Mammary epithelial cell (primary cell): ENCODE measurements at regions of chr12 and their contacts with region 1.

Region 1: DNA sequence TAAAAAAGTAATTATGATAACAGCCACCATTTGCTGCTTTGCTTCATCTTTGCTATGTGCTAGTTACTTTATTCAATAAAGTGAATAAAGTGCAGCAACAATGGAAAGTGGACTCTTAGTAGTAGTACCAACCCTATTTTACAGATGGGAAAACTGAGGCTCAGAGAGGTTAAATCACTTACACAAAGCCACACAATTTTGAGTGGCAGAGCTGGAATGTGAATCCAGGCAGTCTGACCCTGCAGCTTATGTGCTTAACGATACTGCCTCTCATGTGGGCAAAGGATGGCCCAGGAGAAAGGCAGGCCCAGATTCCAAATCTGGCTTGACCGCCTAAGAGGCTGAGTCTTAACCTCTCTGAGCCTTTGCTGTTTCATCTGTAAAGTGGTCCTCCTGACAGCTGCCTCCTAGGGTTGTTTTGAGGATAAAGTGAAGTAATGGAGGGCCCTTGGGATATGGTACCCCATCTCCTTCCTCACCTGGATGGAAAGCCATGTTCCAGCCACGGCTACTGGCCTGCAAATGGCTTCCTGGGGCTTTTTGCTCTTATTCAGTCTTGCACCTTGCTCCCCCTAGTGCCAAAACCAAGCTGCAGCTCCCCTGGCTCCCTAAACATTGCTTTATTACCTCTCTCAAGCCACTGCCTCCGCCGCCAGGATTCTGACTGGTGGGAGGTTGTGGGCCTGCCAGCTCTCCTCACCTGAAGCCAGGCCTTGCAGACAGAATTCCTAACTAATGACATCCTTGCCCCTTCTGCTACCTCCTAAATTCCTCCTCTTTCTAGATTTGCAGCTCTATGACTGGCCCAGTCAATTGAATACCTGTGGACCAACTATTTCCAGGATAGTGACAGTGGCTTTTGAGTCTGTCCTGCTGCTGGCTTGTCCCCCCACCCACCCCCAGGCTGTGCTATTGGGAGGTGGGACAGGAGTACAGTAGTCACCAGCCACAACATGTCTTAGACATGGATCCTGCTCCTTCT is 283.3 kb upstream of the PWP1 start:
- DNase-seq: peak; percentile 75
- H3K4me3 ChIP-seq: no peak overlapping the region
- H3K27ac ChIP-seq: no peak overlapping the region
- H3K4me1 ChIP-seq: peaks cover 6% of the 10 kb centered on the region
- H3K27me3 ChIP-seq: no peaks in the 10 kb centered on the region
- CTCF ChIP-seq: peak; percentile 89 to 93

Region 2: DNA sequence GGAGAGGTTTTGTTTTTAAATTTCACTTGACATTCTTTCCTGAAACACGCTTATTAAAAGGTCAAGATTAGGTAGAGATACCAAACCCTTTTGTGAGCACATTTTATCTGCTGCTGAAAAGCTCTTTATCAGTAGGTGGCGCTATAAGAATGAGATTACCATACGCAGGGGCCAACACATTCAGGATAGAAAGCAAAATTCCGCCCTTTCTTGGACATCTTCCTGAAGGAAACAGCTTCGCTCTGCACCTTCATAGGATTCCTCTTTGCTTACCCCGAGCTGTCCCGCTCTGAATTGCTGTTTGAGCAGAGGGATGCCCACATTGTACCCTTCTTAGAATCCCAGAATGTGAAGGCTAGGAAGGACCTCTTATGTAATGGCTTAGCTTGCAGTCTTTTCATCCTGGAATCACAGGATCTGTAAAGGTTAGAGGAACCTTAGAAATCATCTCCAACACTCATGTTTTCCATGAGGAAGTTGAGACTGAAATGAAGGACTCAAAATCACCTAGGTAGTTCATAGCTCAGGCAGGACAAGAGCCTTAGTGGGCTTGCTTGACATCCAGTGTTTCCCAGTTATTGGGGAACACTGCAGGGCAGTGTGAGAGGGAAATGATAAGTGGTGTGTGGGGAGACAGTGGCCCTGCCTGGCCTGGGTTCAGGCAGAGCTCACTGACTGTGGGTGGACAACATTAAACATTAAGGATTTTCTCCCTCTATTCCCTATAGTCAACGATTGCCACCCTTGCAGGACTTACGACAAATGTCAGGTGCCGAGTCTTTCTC is 270.3 kb before region 1 on chr12:
- CTCF ChIA-PET with region 1: interaction called, 5 read pairs
- dilution Hi-C with region 1: no loop called
- in situ Hi-C with region 1: loop called (anchors 5 kb)
- intact Hi-C with region 1: loop called (anchors 1 kb)
- DNase-seq: peak; percentile 53
- H3K4me3 ChIP-seq: no peak overlapping the region
- H3K27ac ChIP-seq: no peak overlapping the region
- H3K4me1 ChIP-seq: no peaks in the 10 kb centered on the region
- H3K27me3 ChIP-seq: no peaks in the 10 kb centered on the region
- CTCF ChIP-seq: peak; percentile 87 to 95

Region 3: DNA sequence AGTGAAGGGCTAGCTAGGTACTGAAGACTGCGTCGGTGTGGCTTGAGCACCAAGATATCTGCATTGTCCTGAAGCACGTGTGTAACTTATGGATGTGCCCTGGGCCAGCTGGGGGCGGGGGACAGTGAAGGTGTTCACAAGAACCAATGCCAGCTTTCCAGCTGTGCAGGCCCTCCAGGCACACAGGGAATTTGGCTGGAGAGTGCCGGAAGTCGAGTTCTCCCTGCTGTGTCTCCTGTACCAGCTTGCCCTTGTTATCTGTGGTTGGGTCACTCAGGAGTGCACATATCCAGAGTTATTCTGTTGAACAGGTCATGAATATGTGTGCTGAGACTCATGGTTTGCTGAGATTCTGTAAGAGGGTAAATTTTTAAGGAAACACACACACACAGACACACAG is 233.1 kb before region 1 on chr12:
- CTCF ChIA-PET with region 1: no interaction called
- dilution Hi-C with region 1: no loop called
- in situ Hi-C with region 1: no loop called
- intact Hi-C with region 1: no loop called
- DNase-seq: peak; percentile 67
- H3K4me3 ChIP-seq: no peak overlapping the region
- H3K27ac ChIP-seq: no peak overlapping the region
- H3K4me1 ChIP-seq: peaks cover 11% of the 10 kb centered on the region
- H3K27me3 ChIP-seq: no peaks in the 10 kb centered on the region
- CTCF ChIP-seq: no peak

Region 4: GRCh38 chr12:107304588-107305532 is 97.5 kb before region 1 on chr12:
- CTCF ChIA-PET with region 1: no interaction called
- dilution Hi-C with region 1: loop called (anchors 5 kb)
- in situ Hi-C with region 1: no loop called
- intact Hi-C with region 1: no loop called
- DNase-seq: peak; percentile 24
- H3K4me3 ChIP-seq: no peak overlapping the region
- H3K27ac ChIP-seq: no peak overlapping the region
- H3K4me1 ChIP-seq: peaks cover 6% of the 10 kb centered on the region
- H3K27me3 ChIP-seq: no peaks in the 10 kb centered on the region
- CTCF ChIP-seq: no peak

Region 5: DNA sequence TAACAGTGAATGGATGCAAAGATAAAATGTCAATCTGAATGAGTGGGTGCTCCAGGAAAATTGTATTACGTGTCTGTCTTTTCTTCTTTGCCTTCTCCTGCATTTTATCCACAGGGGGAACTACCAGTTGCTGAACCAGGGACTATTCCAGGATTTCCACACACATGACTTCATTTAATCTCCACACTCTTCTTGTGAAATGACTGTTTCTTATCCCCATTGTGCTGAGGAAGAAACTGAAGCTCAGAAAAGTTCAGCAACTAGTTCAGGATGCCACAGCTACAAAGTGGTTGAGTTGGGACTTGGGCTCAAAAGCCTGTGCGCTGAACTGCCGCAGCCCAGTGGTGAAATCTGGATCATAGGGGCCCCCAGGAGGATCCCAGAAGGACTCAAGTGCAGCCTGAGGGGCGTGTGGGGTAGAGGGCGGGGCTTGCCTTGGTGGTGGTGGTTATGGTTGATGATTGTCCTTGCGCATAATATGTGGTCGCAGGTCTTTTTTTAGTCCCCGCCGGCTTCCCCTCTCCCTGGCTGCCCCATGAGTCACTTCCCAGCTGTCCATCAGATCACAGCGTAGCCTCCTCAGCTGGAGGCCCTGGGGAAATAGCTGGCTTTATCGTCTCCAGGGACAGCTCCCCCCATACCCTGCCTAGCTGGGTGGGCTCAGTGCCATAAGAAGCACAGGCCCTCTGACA is 73.7 kb before region 1 on chr12:
- CTCF ChIA-PET with region 1: no interaction called
- dilution Hi-C with region 1: loop called (anchors 5 kb)
- in situ Hi-C with region 1: no loop called
- intact Hi-C with region 1: no loop called
- DNase-seq: no peak
- H3K4me3 ChIP-seq: no peak overlapping the region
- H3K27ac ChIP-seq: no peak overlapping the region
- H3K4me1 ChIP-seq: peaks cover 17% of the 10 kb centered on the region
- H3K27me3 ChIP-seq: no peaks in the 10 kb centered on the region
- CTCF ChIP-seq: no peak

Region 6: GRCh38 chr12:107436376-107436775 is 34.0 kb after region 1 on chr12:
- CTCF ChIA-PET with region 1: no interaction called
- dilution Hi-C with region 1: no loop called
- in situ Hi-C with region 1: no loop called
- intact Hi-C with region 1: loop called (anchors 2 kb)
- DNase-seq: peak; percentile 89
- H3K4me3 ChIP-seq: no peak overlapping the region
- H3K27ac ChIP-seq: peak overlapping the region; percentile 37
- H3K4me1 ChIP-seq: peaks cover 34% of the 10 kb centered on the region
- H3K27me3 ChIP-seq: no peaks in the 10 kb centered on the region
- CTCF ChIP-seq: no peak

Region 7: GRCh38 chr12:107515446-107515958 is 113.2 kb after region 1 on chr12:
- CTCF ChIA-PET with region 1: no interaction called
- dilution Hi-C with region 1: no loop called
- in situ Hi-C with region 1: no loop called
- intact Hi-C with region 1: loop called (anchors 1 kb)
- DNase-seq: peak; percentile 99
- H3K4me3 ChIP-seq: no peak overlapping the region
- H3K27ac ChIP-seq: peak overlapping the region; percentile 97
- H3K4me1 ChIP-seq: peaks cover 28% of the 10 kb centered on the region
- H3K27me3 ChIP-seq: no peaks in the 10 kb centered on the region
- CTCF ChIP-seq: no peak

Region 8: GRCh38 chr12:107607464-107608392 is 205.4 kb after region 1 on chr12:
- CTCF ChIA-PET with region 1: interaction called, 3 read pairs
- dilution Hi-C with region 1: no loop called
- in situ Hi-C with region 1: loop called (anchors 10 kb)
- intact Hi-C with region 1: loop called (anchors 1 kb)
- DNase-seq: peak; percentile 55
- H3K4me3 ChIP-seq: no peak overlapping the region
- H3K27ac ChIP-seq: no peak overlapping the region
- H3K4me1 ChIP-seq: peaks cover 3% of the 10 kb centered on the region
- H3K27me3 ChIP-seq: no peaks in the 10 kb centered on the region
- CTCF ChIP-seq: peak; percentile 95 to 96

Region 9: DNA sequence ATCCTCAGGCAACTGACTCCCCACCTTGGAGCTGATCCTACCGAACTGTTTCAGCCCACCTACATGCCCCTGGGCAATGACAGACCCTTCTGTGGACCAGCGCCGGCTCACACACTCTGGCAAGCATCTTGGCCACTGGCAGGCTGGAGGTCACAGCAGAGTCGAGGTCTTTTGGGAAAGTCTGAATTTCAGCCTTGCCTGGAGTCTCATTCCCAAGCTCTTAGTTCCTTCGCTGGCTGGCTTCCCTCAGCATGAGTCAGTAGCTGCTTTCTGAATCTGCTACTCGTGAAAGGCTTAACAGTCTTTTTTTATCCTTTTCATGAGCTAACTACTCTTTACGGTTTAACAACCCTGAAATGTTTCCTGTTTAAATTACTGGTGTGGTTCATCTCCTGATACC is 416.7 kb after region 1 on chr12:
- CTCF ChIA-PET with region 1: no interaction called
- dilution Hi-C with region 1: no loop called
- in situ Hi-C with region 1: no loop called
- intact Hi-C with region 1: no loop called
- DNase-seq: peak; percentile 5
- H3K4me3 ChIP-seq: no peak overlapping the region
- H3K27ac ChIP-seq: no peak overlapping the region
- H3K4me1 ChIP-seq: no peaks in the 10 kb centered on the region
- H3K27me3 ChIP-seq: peaks cover 2% of the 10 kb centered on the region
- CTCF ChIP-seq: no peak

Region 10: GRCh38 chr12:108017472-108018057 is 615.2 kb after region 1 on chr12:
- CTCF ChIA-PET with region 1: no interaction called
- dilution Hi-C with region 1: no loop called
- in situ Hi-C with region 1: no loop called
- intact Hi-C with region 1: no loop called
- DNase-seq: no peak
- H3K4me3 ChIP-seq: no peak overlapping the region
- H3K27ac ChIP-seq: no peak overlapping the region
- H3K4me1 ChIP-seq: no peaks in the 10 kb centered on the region
- H3K27me3 ChIP-seq: no peaks in the 10 kb centered on the region
- CTCF ChIP-seq: no peak